ENCODE measurements at regions of chr7 and their contacts with region 1.

Region 1: GRCh38 chr7:41711283-41712064 is 8.6 kb upstream of the INHBA start:
- DNase-seq: peak; percentile 57
- H3K4me3 Mint-ChIP-seq: no peak overlapping the region
- H3K27ac Mint-ChIP-seq: no peak overlapping the region
- H3K4me1 Mint-ChIP-seq: no peaks in the 10 kb centered on the region
- H3K27me3 Mint-ChIP-seq: no peaks in the 10 kb centered on the region
- CTCF ChIP-seq: peak; percentile 27

Region 2: DNA sequence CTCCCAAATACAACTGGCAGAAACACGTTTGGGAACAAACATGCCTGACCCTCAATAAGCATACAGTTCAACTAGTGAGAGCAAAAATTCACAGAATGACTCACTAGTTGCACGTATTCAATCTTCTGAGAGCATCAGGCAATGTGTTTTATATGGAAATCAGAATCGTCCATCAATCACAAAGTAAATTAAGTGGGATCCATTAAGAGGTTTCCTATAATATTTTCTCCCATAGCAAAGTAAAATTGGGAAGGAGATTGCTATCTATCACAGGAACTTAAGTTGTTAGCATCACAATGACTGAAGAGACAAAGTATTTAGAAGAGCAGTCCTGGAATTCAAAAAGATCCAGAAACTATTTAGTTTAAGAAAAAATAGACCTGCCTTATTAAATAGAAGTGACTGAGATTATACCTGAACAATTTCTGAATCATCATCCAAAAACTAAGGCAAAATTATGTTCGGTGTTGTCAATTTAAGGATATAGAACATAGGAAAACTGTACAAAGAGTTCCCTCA is 36.9 kb before region 1 on chr7:
- CTCF ChIA-PET with region 1: no interaction called
- POLR2A ChIA-PET with region 1: no interaction called
- intact Hi-C with region 1: no loop called
- DNase-seq: no peak
- H3K4me3 Mint-ChIP-seq: no peak overlapping the region
- H3K27ac Mint-ChIP-seq: no peak overlapping the region
- H3K4me1 Mint-ChIP-seq: no peaks in the 10 kb centered on the region
- H3K27me3 Mint-ChIP-seq: no peaks in the 10 kb centered on the region
- CTCF ChIP-seq: no peak

Region 3: GRCh38 chr7:41725013-41725412 is 13.5 kb after region 1 on chr7:
- CTCF ChIA-PET with region 1: interaction called, 11 read pairs
- POLR2A ChIA-PET with region 1: no interaction called
- intact Hi-C with region 1: no loop called
- DNase-seq: no peak
- H3K4me3 Mint-ChIP-seq: no peak overlapping the region
- H3K27ac Mint-ChIP-seq: no peak overlapping the region
- H3K4me1 Mint-ChIP-seq: no peaks in the 10 kb centered on the region
- H3K27me3 Mint-ChIP-seq: no peaks in the 10 kb centered on the region
- CTCF ChIP-seq: no peak

Region 4: GRCh38 chr7:41735206-41735605 is 23.7 kb after region 1 on chr7:
- CTCF ChIA-PET with region 1: no interaction called
- POLR2A ChIA-PET with region 1: no interaction called
- intact Hi-C with region 1: no loop called
- DNase-seq: no peak
- H3K4me3 Mint-ChIP-seq: no peak overlapping the region
- H3K27ac Mint-ChIP-seq: no peak overlapping the region
- H3K4me1 Mint-ChIP-seq: no peaks in the 10 kb centered on the region
- H3K27me3 Mint-ChIP-seq: peaks cover 17% of the 10 kb centered on the region
- CTCF ChIP-seq: no peak

Region 5: GRCh38 chr7:41760293-41760692 is 48.8 kb after region 1 on chr7:
- CTCF ChIA-PET with region 1: no interaction called
- POLR2A ChIA-PET with region 1: no interaction called
- intact Hi-C with region 1: no loop called
- DNase-seq: no peak
- H3K4me3 Mint-ChIP-seq: no peak overlapping the region
- H3K27ac Mint-ChIP-seq: no peak overlapping the region
- H3K4me1 Mint-ChIP-seq: no peaks in the 10 kb centered on the region
- H3K27me3 Mint-ChIP-seq: no peaks in the 10 kb centered on the region
- CTCF ChIP-seq: no peak

Region 6: GRCh38 chr7:41779918-41780317 is 68.4 kb after region 1 on chr7:
- CTCF ChIA-PET with region 1: no interaction called
- POLR2A ChIA-PET with region 1: no interaction called
- intact Hi-C with region 1: no loop called
- DNase-seq: peak; percentile 12
- H3K4me3 Mint-ChIP-seq: no peak overlapping the region
- H3K27ac Mint-ChIP-seq: no peak overlapping the region
- H3K4me1 Mint-ChIP-seq: peaks cover 15% of the 10 kb centered on the region
- H3K27me3 Mint-ChIP-seq: no peaks in the 10 kb centered on the region
- CTCF ChIP-seq: no peak

Measured in MCF 10A (cell line).